Activated CD8-positive, alpha-beta memory T cell treated with anti-CD3 and anti-CD28 coated beads, Interleukin-2, amount 10 ng/mL, durations not matched to agents 7 days and 5 days (primary cell): ENCODE measurements at regions of chr22 and their contacts with region 1.

Region 1: GRCh38 chr22:19730655-19731360 is 7.5 kb downstream of the GP1BB start:
- DNase-seq: peak; percentile 87
- ATAC-seq: peak; percentile 93
- H3K4me3 Mint-ChIP-seq: peak overlapping the region; percentile 44
- H3K27ac Mint-ChIP-seq: no peak overlapping the region
- H3K4me1 Mint-ChIP-seq: peaks cover 3% of the 10 kb centered on the region
- H3K27me3 Mint-ChIP-seq: peaks cover 3% of the 10 kb centered on the region

Region 2: GRCh38 chr22:19576460-19577421 is 154.1 kb before region 1 on chr22:
- CTCF ChIA-PET with region 1: no interaction called
- DNase-seq: peak; percentile 84
- ATAC-seq: peak; percentile 97
- H3K4me3 Mint-ChIP-seq: no peak overlapping the region
- H3K27ac Mint-ChIP-seq: peak overlapping the region; percentile 67
- H3K4me1 Mint-ChIP-seq: peaks cover 41% of the 10 kb centered on the region
- H3K27me3 Mint-ChIP-seq: peaks cover 7% of the 10 kb centered on the region

Region 3: DNA sequence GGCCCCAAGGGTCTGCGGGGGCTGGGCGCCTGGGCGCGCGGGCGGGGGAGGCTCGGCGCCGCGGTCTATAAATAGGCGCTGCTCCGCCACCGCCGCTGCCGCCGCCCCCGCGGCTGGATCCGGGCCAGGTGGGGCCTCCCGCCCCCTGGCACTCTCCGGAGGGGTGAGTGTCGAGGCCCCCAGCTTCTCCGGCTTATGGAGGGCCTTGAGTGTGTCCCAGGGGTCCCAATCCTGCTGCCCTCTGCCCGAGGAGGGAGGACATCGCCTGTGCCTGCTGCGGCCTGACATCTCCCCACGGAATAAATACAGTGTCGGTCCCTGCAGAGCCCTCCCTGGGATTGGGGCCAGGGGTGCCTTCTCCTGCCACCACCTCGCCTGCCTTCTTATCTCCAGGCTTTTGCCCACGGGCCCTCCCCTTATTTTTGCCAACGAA is 11.7 kb before region 1 on chr22:
- CTCF ChIA-PET with region 1: interaction called, 13 read pairs
- DNase-seq: no peak
- ATAC-seq: no peak
- H3K4me3 Mint-ChIP-seq: peak overlapping the region; percentile 2
- H3K27ac Mint-ChIP-seq: no peak overlapping the region
- H3K4me1 Mint-ChIP-seq: peaks cover 7% of the 10 kb centered on the region
- H3K27me3 Mint-ChIP-seq: peaks cover 48% of the 10 kb centered on the region

Region 4: DNA sequence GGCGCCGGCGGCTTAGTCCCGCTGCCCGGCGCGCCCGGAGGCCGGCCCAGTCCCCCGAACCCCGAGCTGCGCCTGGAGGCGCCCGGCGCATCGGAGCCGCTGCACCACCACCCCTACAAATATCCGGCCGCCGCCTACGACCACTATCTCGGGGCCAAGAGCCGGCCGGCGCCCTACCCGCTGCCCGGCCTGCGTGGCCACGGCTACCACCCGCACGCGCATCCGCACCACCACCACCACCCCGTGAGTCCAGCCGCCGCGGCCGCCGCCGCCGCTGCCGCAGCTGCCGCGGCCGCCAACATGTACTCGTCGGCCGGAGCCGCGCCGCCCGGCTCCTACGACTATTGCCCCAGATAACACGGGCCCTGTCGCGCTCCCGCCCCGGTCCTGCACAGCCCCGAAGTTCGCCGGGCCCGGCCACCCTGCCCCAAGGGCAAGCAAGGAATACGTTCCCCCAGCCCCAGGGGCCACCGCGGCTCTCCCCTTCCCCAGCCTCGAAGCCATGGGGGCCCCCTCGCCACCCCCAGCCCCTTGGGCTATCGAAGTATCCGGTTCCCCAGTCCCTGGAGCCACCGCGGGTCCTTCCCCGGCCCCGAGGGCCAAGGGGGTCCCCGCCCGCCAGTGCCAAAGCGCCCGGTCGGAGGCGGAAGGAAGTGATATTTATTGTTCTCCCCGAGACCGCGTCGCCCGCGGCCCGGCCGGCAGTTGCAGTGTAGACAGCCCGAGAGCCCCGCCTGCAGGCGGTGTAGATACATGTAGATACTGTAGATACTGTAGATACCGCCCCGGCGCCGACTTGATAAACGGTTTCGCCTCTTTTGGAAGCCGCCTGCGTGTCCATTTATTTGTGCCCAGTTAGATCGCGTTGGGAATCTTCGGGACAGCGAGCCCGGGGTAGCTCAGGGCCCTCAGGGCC is 36.0 kb after region 1 on chr22:
- CTCF ChIA-PET with region 1: interaction called, 20 read pairs
- DNase-seq: peak; percentile 83
- ATAC-seq: peak; percentile 88
- H3K4me3 Mint-ChIP-seq: peak overlapping the region; percentile 43
- H3K27ac Mint-ChIP-seq: no peak overlapping the region
- H3K4me1 Mint-ChIP-seq: peaks cover 12% of the 10 kb centered on the region
- H3K27me3 Mint-ChIP-seq: peaks cover 81% of the 10 kb centered on the region

Region 5: GRCh38 chr22:19909350-19910179 is 178.8 kb after region 1 on chr22:
- CTCF ChIA-PET with region 1: interaction called, 106 read pairs
- DNase-seq: peak; percentile 88
- ATAC-seq: peak; percentile 95
- H3K4me3 Mint-ChIP-seq: no peak overlapping the region
- H3K27ac Mint-ChIP-seq: peak overlapping the region; percentile 12
- H3K4me1 Mint-ChIP-seq: peaks cover 3% of the 10 kb centered on the region
- H3K27me3 Mint-ChIP-seq: no peaks in the 10 kb centered on the region

Region 6: DNA sequence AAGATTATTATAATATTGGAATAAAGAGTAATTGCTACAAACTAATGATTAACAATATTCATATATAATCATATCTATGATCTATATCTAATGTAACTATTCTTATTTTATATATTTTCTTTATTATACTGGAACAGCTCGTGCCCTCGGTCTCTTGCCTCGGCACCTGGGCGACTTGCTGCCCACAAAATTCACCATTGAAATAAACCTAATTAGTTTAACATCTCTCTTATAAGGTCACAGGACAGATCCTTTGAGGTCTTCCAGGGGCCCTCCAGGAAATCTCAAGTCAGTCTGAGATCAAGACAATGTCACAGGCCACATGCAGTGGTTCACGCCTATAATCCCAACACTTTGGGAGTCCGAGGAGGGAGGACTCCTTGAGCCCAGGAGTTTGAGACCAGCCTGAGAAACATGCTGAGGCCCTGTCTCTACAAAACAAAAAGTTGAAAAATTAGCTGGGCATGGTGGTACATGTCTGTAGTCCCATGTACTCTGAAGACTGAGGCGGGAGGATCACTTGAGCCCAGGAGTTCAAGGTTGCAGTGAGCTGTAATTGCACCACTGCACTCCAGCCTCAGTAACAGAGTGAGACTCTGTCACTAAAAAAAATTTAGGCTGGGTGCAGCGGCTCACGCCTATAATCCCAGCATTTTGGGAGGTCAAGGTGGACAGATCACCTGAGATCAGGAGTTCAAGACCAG is 217.4 kb after region 1 on chr22:
- CTCF ChIA-PET with region 1: interaction called, 24 read pairs
- DNase-seq: no peak
- ATAC-seq: no peak
- H3K4me3 Mint-ChIP-seq: no peak overlapping the region
- H3K27ac Mint-ChIP-seq: no peak overlapping the region
- H3K4me1 Mint-ChIP-seq: peaks cover 19% of the 10 kb centered on the region
- H3K27me3 Mint-ChIP-seq: no peaks in the 10 kb centered on the region

Region 7: GRCh38 chr22:20013382-20013871 is 282.6 kb after region 1 on chr22:
- CTCF ChIA-PET with region 1: interaction called, 23 read pairs
- DNase-seq: peak; percentile 66
- ATAC-seq: no peak
- H3K4me3 Mint-ChIP-seq: no peak overlapping the region
- H3K27ac Mint-ChIP-seq: no peak overlapping the region
- H3K4me1 Mint-ChIP-seq: peaks cover 14% of the 10 kb centered on the region
- H3K27me3 Mint-ChIP-seq: peaks cover 32% of the 10 kb centered on the region